ENCODE measurements at regions of chr11 and their contacts with region 1.

Region 1: DNA sequence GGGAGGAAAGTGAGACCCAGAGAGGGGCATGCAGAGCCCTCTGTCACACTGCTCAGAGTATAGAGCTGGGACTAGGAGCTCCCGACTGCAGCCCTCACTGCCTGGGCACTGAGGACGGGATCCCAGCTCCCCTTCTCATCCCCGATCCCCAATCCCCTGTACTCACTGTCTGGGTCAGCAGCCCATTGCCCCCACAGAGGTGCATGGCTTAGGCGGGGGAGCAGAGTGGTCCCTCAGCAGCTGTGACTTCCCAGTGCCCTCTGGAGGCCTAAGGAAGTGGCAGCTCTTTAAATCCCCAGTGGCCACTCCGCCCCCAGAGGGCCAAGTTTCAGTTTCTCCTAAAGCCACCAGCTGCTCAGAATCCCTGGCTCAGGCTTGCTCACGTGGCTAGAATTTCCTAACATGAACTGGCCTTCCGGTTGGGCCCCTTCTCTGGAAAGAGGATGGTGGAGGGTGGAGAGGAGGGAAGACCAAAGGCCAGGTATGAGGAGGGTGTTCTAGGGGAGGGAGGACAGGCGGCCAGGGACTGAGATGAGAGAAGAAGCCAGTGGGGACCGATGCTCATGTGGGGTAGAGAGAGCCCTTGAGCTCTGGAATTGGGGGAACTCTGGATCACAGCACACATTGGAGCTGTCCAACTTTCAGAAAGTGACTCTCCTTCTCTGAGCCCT is at the start of gene BATF2:
- DNase-seq: peak; percentile 85 to 95 (median 93)
- H3K4me3 ChIP-seq: peak within 1 kb of the TSS; percentile 26 to 89 (median 73)
- H3K27ac ChIP-seq: peak within 1 kb of the TSS; percentile 74 to 85
- H3K4me1 ChIP-seq: peaks cover 0 to 18% (median 6%) of the 10 kb centered on the region in 3 donors
- H3K27me3 ChIP-seq: no peaks in the 10 kb centered on the region
- CTCF ChIP-seq: peak; percentile 56
- total RNA-seq, gene BATF2: 5.9 TPM

Region 2: GRCh38 chr11:64935359-64936081 is 61.3 kb before region 1 on chr11 and contains the start of gene GPHA2:
- intact Hi-C with region 1: loop called (anchors 10 kb)
- DNase-seq: peak in 4 of 5 donors; percentile 75 to 88 (median 80)
- H3K4me3 ChIP-seq: no peak within 1 kb of the TSS
- H3K27ac ChIP-seq: no peak within 1 kb of the TSS
- H3K4me1 ChIP-seq: peaks cover 0 to 2% (median 0%) of the 10 kb centered on the region in 3 donors
- H3K27me3 ChIP-seq: no peaks in the 10 kb centered on the region
- CTCF ChIP-seq: no peak
- total RNA-seq, gene GPHA2: not detected